CD4-positive, alpha-beta memory T cell (primary cell): ENCODE measurements at regions of chr7 and their contacts with region 1.

Region 1: GRCh38 chr7:105413887-105414437 is 25.2 kb upstream of the SRPK2 start:
- DNase-seq: no peak
- H3K4me3 ChIP-seq: no peak overlapping the region
- H3K4me3 Mint-ChIP-seq: no peak overlapping the region
- H3K27ac ChIP-seq: no peak overlapping the region
- H3K27ac Mint-ChIP-seq: no peak overlapping the region
- H3K4me1 ChIP-seq: no peaks in the 10 kb centered on the region
- H3K4me1 Mint-ChIP-seq: peaks cover 0 to 4% (median 3%) of the 10 kb centered on the region in 4 donors
- H3K27me3 ChIP-seq: no peaks in the 10 kb centered on the region
- H3K27me3 Mint-ChIP-seq: no peaks in the 10 kb centered on the region

Region 2: DNA sequence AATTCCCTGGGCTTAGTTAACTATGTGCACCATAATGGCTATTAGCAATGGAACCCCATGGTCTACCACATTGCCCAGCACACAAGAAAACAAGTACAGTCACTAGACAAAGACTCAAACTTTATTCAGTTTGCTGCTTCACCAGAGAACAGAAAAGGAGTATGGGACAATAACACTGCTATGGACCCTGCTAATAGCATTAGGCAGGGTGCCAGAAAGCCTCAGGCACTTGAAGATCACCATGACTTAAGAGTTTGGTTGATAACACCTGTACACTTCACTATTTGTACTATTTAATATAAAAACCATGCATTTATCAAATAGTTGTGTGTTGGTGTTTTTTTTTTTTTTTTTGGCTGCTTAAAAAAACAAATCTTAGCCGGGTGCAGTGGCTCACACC is 240.4 kb before region 1 on chr7:
- CTCF ChIA-PET with region 1: no interaction called
- POLR2A ChIA-PET with region 1: no interaction called
- intact Hi-C with region 1: no loop called
- DNase-seq: no peak
- H3K4me3 ChIP-seq: no peak overlapping the region
- H3K4me3 Mint-ChIP-seq: no peak overlapping the region
- H3K27ac ChIP-seq: no peak overlapping the region
- H3K27ac Mint-ChIP-seq: peak overlapping the region in 1 of 7 donors; percentile 43
- H3K4me1 ChIP-seq: no peaks in the 10 kb centered on the region
- H3K4me1 Mint-ChIP-seq: peaks cover 10 to 32% (median 18%) of the 10 kb centered on the region in 4 donors
- H3K27me3 ChIP-seq: no peaks in the 10 kb centered on the region
- H3K27me3 Mint-ChIP-seq: no peaks in the 10 kb centered on the region

Region 3: DNA sequence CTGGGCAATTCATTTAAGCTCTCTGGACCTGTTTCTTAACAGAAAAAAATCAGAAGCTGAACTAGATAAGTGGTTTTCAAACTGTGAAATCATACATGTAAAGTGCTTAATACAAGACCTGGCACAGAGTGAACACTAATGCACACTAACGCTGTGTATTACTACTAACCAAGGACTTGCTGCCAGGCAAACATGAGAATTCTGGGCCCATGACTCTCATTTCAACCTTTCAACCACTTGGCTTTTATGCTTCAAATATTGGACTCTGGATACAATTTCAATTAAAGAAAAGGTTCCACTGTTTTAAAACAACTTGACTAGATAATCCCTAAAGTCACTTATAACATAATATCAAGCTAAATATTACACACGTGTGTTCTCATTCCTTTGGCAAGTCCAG is 98.6 kb before region 1 on chr7:
- CTCF ChIA-PET with region 1: no interaction called
- POLR2A ChIA-PET with region 1: no interaction called
- intact Hi-C with region 1: no loop called
- DNase-seq: no peak
- H3K4me3 ChIP-seq: no peak overlapping the region
- H3K4me3 Mint-ChIP-seq: no peak overlapping the region
- H3K27ac ChIP-seq: no peak overlapping the region
- H3K27ac Mint-ChIP-seq: no peak overlapping the region
- H3K4me1 ChIP-seq: peaks cover 4% of the 10 kb centered on the region
- H3K4me1 Mint-ChIP-seq: peaks cover 21 to 42% (median 25%) of the 10 kb centered on the region in 4 donors
- H3K27me3 ChIP-seq: no peaks in the 10 kb centered on the region
- H3K27me3 Mint-ChIP-seq: no peaks in the 10 kb centered on the region

Region 4: GRCh38 chr7:105399043-105399725 is 14.8 kb before region 1 on chr7:
- CTCF ChIA-PET with region 1: interaction called, 10 read pairs
- POLR2A ChIA-PET with region 1: interaction called, 5 read pairs
- intact Hi-C with region 1: no loop called
- DNase-seq: no peak
- H3K4me3 ChIP-seq: no peak overlapping the region
- H3K4me3 Mint-ChIP-seq: no peak overlapping the region
- H3K27ac ChIP-seq: no peak overlapping the region
- H3K27ac Mint-ChIP-seq: no peak overlapping the region
- H3K4me1 ChIP-seq: no peaks in the 10 kb centered on the region
- H3K4me1 Mint-ChIP-seq: peaks cover 0 to 1% (median 0%) of the 10 kb centered on the region in 4 donors
- H3K27me3 ChIP-seq: no peaks in the 10 kb centered on the region
- H3K27me3 Mint-ChIP-seq: no peaks in the 10 kb centered on the region